A673 (cell line): ENCODE measurements at regions of chr22 and their contacts with region 1.

Region 1: DNA sequence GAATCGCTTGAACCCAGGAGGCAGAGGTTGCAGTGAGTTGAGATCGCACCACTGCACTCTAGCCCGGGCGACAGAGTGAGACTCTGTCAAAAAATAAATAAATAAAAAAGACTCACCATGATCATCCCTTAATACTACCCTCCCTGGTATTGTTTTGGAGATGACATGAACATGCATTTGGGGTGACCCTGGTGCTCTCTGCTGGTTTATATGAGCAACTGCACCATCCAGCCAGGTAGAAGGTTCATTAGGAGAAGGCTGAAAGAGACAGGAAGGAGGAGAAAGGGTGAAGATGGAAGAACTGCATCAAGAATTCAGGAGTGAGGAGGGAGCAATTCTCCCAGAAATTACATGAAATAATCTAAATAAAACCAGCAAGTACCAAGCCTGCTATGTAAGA is 37.8 kb downstream of the SLC5A1 start:
- DNase-seq: peak; percentile 69
- H3K4me3 ChIP-seq: no peak overlapping the region
- H3K27ac ChIP-seq: no peak overlapping the region
- H3K4me1 ChIP-seq: peaks cover 5% of the 10 kb centered on the region
- H3K27me3 ChIP-seq: no peaks in the 10 kb centered on the region
- CTCF ChIP-seq: peak; percentile 69

Region 2: GRCh38 chr22:33038131-33038772 is 957.3 kb after region 1 on chr22:
- CTCF ChIA-PET with region 1: no interaction called
- POLR2A ChIA-PET with region 1: interaction called, 20 read pairs
- intact Hi-C with region 1: no loop called
- DNase-seq: peak; percentile 43
- H3K4me3 ChIP-seq: no peak overlapping the region
- H3K27ac ChIP-seq: no peak overlapping the region
- H3K4me1 ChIP-seq: peaks cover 7% of the 10 kb centered on the region
- H3K27me3 ChIP-seq: no peaks in the 10 kb centered on the region
- CTCF ChIP-seq: no peak